ENCODE measurements at regions of chr4 and their contacts with region 1.

Region 1: GRCh38 chr4:101291198-101291597 is 56.1 kb downstream of the PPP3CA start:
- DNase-seq: no peak
- ATAC-seq: no peak
- H3K4me3 Mint-ChIP-seq: no peak overlapping the region
- H3K27ac Mint-ChIP-seq: peak overlapping the region; percentile 30
- H3K4me1 Mint-ChIP-seq: peaks cover 73% of the 10 kb centered on the region
- H3K27me3 Mint-ChIP-seq: no peaks in the 10 kb centered on the region
- CTCF ChIP-seq: no peak

Region 2: GRCh38 chr4:101265816-101266172 is 25.4 kb before region 1 on chr4:
- CTCF ChIA-PET with region 1: no interaction called
- POLR2A ChIA-PET with region 1: no interaction called
- intact Hi-C with region 1: loop called (anchors 2 kb)
- DNase-seq: no peak
- ATAC-seq: no peak
- H3K4me3 Mint-ChIP-seq: peak overlapping the region; percentile 48
- H3K27ac Mint-ChIP-seq: peak overlapping the region; percentile 69
- H3K4me1 Mint-ChIP-seq: peaks cover 87% of the 10 kb centered on the region
- H3K27me3 Mint-ChIP-seq: no peaks in the 10 kb centered on the region
- CTCF ChIP-seq: no peak

Region 3: DNA sequence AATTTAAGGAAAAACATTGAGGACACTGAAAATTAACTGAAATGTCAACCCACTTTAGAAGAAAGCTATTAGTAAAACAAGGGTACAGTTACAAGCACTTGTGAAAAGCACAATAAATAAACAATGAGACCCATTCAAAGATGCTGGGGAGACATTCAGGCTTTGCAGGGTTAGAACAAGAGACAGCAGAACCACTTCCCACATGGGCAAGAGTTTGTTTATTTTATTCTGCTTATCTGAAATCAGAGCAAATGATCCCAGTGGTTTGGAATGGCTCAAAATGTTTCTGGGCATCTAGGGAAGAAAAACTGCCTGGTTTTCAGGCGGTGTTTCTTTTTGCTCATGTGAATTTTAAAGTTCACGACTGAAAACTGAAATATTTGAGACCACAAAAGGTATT is 13.7 kb after region 1 on chr4:
- CTCF ChIA-PET with region 1: no interaction called
- POLR2A ChIA-PET with region 1: interaction called, 4 read pairs
- intact Hi-C with region 1: loop called (anchors 2 kb)
- DNase-seq: no peak
- ATAC-seq: no peak
- H3K4me3 Mint-ChIP-seq: no peak overlapping the region
- H3K27ac Mint-ChIP-seq: no peak overlapping the region
- H3K4me1 Mint-ChIP-seq: peaks cover 60% of the 10 kb centered on the region
- H3K27me3 Mint-ChIP-seq: no peaks in the 10 kb centered on the region
- CTCF ChIP-seq: no peak

Measured in activated B cell treated with CpG ODN at 0.5 μM for 24 hours (primary cell).